HCT116 (cell line): ENCODE measurements at regions of chr3 and their contacts with region 1.

Region 1: DNA sequence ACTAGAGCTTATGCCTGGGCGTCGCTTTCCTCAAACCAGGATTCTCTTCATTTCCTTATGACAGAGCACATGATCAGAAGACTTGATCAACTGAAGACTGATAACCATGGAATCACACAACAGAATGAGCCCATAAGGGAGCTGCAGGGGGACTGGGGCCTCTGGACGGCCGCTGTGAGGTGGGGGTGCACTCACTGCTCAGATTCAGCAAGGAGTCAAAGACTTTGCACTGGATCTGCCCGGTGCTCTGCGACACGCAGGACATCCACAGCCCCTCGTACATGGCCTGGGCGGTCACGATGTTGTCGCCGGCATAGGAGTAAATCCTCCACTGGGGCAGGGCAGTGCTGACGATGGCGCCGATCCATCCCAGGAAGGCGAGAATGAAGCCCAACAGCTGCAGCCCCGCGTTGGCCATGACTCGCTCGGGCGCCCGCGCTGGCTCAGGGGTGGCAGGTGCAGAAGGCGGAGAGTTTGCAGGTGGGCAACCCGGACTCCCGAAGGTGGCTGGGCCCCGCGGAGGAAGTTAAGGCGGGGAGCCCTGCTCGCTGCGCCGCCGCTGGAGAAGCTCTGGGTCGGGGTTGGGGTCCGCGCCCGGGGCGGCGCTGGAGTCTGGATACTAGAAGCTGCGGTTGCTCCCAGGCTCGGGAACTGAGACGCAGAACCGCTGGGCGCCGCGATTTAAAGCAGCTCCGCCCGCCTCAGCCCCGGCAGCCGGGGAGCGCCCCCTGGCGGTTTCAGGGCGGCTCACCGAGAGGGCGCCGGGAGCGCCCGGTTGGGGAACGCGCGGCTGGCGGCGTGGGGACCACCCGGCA is at the start of gene CLDN1:
- DNase-seq: peak; percentile 24
- ATAC-seq: peak; percentile 97
- H3K4me3 ChIP-seq: peak within 1 kb of the TSS; percentile 25 to 34
- H3K27ac ChIP-seq: no peak within 1 kb of the TSS
- H3K4me1 ChIP-seq: peaks cover 0 to 10% of the 10 kb centered on the region in 2 experiments; a peak in 1 of 4 replicates
- H3K27me3 ChIP-seq: no peaks in the 10 kb centered on the region; the same call in 1 of the 2 replicates
- CTCF ChIP-seq: peak; percentile 79 to 92 (median 84)
- POLR2A ChIP-seq: no peak
- RAD21 ChIP-seq: peak; percentile 85
- total RNA-seq, gene CLDN1: 0.20 TPM

Region 2: GRCh38 chr3:190150681-190151080 is 171.3 kb before region 1 on chr3:
- CTCF ChIA-PET with region 1: no interaction called
- POLR2A ChIA-PET with region 1: no interaction called
- RAD21 ChIA-PET with region 1: no interaction called
- intact Hi-C with region 1: no loop called
- DNase-seq: no peak
- ATAC-seq: no peak
- H3K4me3 ChIP-seq: no peak overlapping the region
- H3K27ac ChIP-seq: no peak overlapping the region
- H3K4me1 ChIP-seq: peaks cover 0 to 4% of the 10 kb centered on the region in 2 experiments; a peak in 2 of 4 replicates
- H3K27me3 ChIP-seq: no peaks in the 10 kb centered on the region
- CTCF ChIP-seq: no peak
- POLR2A ChIP-seq: no peak
- RAD21 ChIP-seq: no peak

Region 3: GRCh38 chr3:190339130-190339529 is 17.1 kb after region 1 on chr3:
- CTCF ChIA-PET with region 1: interaction called, 10 read pairs
- POLR2A ChIA-PET with region 1: interaction called, 3 read pairs
- RAD21 ChIA-PET with region 1: no interaction called
- intact Hi-C with region 1: no loop called
- DNase-seq: peak; percentile 18
- ATAC-seq: peak; percentile 79
- H3K4me3 ChIP-seq: no peak overlapping the region
- H3K27ac ChIP-seq: no peak overlapping the region
- H3K4me1 ChIP-seq: peaks cover 0 to 7% of the 10 kb centered on the region in 2 experiments; a peak in 2 of 4 replicates
- H3K27me3 ChIP-seq: no peaks in the 10 kb centered on the region
- CTCF ChIP-seq: peak in 2 of 3 experiments; percentile 25 to 46; a peak in 3 of 6 replicates
- POLR2A ChIP-seq: no peak
- RAD21 ChIP-seq: peak; percentile 27; the same call in 1 of the 2 replicates